ENCODE measurements at regions of chr9 and their contacts with region 1.

Region 1: GRCh38 chr9:101601904-101602765 is 7.4 kb upstream of the PPP3R2 start:
- DNase-seq: peak in 1 of 2 experiments; percentile 15
- H3K4me3 ChIP-seq: no peak overlapping the region
- H3K27ac ChIP-seq: no peak overlapping the region
- H3K4me1 ChIP-seq: no peaks in the 10 kb centered on the region
- H3K27me3 ChIP-seq: peaks cover 14% of the 10 kb centered on the region
- CTCF ChIP-seq: peak; percentile 72

Region 2: DNA sequence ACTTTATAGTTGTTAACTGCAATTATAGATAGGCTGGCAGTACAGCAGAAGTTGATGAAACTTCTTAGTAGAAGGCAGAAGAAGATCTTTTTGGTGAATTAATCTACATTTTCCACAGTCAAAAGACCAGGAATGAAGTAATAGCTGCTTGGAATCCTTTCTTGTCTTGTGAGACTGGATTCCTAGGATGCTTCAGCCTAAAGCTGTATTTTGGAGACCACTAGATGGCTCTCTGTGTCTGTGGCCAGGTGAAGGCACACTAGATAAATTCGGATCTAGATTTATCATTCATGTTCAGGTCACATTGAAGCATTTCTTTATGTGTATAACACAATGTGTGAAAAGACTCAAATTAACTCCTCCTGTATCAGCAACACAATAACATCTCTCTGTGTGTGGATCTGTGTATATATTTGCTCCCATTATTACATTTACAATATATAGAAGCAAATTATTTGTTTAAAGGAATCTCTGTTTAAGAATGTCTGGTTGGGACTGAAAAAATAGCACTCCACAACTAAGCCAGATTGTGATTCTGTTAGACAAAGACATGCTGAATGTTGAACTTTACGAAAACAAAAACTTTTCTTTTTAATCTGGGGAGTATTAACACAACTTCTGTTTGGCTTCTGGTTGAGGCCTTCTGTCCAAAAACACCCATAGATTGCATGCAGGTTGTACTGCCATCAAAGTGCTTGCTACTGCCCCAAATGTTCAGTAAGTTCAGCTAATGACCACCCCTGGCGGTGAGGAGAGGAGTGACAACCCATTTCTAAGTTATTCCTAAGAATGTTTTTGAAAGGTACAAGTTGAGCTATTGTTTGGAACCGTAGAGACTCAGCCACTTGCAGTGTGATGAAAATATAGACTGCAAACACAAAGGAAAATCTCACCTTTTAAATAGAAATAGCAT is 125.7 kb after region 1 on chr9:
- CTCF ChIA-PET with region 1: interaction called, 7 read pairs
- POLR2A ChIA-PET with region 1: no interaction called
- intact Hi-C with region 1: loop called (anchors 5 kb)
- DNase-seq: no peak
- H3K4me3 ChIP-seq: no peak overlapping the region
- H3K27ac ChIP-seq: no peak overlapping the region
- H3K4me1 ChIP-seq: no peaks in the 10 kb centered on the region
- H3K27me3 ChIP-seq: no peaks in the 10 kb centered on the region
- CTCF ChIP-seq: peak; percentile 53; the same call in 1 of the 2 replicates

Region 3: DNA sequence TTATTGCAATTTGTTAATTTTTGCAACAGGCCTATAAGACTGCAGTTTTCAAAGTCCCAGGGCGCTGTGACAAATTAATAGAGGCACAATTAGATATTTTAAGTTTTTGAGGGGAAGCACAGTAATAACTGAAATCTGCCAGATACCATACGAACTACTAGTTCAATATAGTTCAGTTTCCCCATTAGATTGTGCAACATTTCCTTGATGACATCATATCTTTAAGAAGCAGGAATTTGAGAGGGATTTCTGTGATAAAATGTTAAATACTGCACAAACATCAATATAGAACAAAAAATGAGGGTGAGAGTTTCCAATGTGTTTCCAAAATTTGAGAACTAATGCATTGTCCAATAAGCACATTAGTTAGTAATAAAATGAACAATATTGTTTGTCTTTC is 193.0 kb after region 1 on chr9:
- CTCF ChIA-PET with region 1: no interaction called
- POLR2A ChIA-PET with region 1: no interaction called
- intact Hi-C with region 1: loop called (anchors 5 kb)
- DNase-seq: no peak
- H3K4me3 ChIP-seq: no peak overlapping the region
- H3K27ac ChIP-seq: no peak overlapping the region
- H3K4me1 ChIP-seq: no peaks in the 10 kb centered on the region
- H3K27me3 ChIP-seq: no peaks in the 10 kb centered on the region
- CTCF ChIP-seq: no peak